MCF 10A (cell line): ENCODE measurements at regions of chr3 and their contacts with region 1.

Region 1: DNA sequence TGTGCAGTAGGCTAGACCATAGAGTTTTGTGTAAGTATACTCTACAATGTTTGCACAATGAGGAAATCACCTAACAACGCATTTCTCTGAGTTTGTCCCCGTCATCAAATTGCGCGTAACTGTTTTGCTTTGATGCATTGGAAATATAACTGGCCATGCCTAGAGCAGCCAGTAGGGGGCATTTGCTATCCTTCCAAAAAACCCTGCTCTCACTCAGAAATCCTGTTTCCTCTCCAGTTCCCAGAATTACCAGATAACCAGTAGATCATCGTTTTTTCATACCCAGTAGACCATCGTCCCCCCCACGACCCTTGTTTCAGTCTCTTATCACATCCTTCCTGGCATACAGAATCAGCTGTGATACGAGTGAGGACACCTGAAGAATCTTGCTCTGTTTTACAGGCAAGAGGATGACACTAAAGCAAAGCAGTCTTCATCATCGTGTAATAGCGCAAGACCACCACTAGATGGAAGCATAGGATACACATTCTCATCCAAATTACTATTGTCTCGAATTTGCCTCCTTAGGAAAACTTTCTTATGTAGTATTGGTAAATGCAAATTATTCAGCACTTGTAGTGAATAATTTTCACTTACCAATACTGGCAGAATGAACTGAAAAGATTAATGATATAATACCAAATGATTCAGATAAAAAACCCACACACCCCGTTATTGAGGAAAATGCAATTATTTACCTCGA is 4.4 kb upstream of the GABRR3 start:
- DNase-seq: peak; percentile 86
- H3K4me3 Mint-ChIP-seq: peak overlapping the region; percentile 59
- H3K27ac Mint-ChIP-seq: no peak overlapping the region
- H3K4me1 Mint-ChIP-seq: no peaks in the 10 kb centered on the region
- H3K27me3 Mint-ChIP-seq: peaks cover 70% of the 10 kb centered on the region
- CTCF ChIP-seq: peak; percentile 79

Region 2: DNA sequence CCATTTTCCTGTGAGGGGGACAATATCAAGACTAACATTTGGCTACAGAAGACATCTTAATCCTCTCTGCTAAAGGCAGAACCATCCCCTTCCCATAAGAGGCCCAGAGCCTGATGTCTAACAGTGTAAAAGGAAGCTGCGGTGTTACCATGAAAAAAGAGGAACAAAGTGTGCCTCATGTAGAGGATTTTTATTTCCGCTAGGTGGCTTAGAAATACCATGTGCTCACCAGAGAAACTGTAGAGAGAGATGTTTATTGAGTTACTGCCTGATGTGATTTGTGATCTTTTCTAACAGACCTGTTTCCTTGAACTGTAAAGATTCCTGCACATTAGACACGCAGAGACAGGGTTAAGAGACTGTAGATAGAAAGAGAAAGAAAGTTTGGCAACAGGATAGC is 149.1 kb after region 1 on chr3:
- CTCF ChIA-PET with region 1: interaction called, 3 read pairs
- POLR2A ChIA-PET with region 1: no interaction called
- intact Hi-C with region 1: loop called (anchors 2 kb)
- DNase-seq: peak; percentile 29
- H3K4me3 Mint-ChIP-seq: no peak overlapping the region
- H3K27ac Mint-ChIP-seq: no peak overlapping the region
- H3K4me1 Mint-ChIP-seq: no peaks in the 10 kb centered on the region
- H3K27me3 Mint-ChIP-seq: no peaks in the 10 kb centered on the region
- CTCF ChIP-seq: peak; percentile 34

Region 3: DNA sequence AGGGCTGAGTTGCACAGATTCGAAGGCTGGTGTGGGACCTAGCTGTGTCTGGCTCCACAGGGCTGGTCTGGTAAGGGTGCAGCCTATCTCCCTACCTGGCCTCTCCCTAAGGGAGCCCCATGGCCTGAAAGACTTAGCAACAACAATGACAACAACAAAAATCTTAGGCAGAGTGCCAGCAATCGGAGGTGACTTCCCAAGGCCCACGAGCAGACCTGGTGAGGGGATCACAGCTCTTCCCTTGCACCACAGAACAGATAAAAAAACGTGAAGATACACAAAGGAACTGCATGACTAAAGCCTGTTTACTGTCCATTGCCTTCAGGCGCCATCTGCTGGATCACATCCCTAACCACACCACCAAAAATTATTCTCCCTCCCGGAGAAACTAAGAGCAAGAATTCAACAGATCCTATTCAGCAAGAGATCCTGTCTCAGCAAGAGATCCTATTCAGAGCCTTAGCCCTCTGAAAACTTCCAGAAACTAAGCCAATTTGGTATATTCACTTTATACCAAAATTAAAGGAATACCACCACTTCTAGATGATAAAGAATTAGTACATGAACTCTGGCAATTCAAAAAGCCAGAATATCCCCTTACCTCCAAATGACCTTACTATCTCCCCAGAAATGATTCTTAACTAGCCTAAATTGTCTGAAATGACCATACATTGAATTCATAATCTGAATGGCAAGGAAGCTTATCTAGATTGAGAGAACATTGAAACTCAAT is 290.1 kb after region 1 on chr3:
- CTCF ChIA-PET with region 1: interaction called, 82 read pairs
- POLR2A ChIA-PET with region 1: no interaction called
- intact Hi-C with region 1: loop called (anchors 1 kb)
- DNase-seq: peak; percentile 69
- H3K4me3 Mint-ChIP-seq: no peak overlapping the region
- H3K27ac Mint-ChIP-seq: no peak overlapping the region
- H3K4me1 Mint-ChIP-seq: no peaks in the 10 kb centered on the region
- H3K27me3 Mint-ChIP-seq: peaks cover 91% of the 10 kb centered on the region
- CTCF ChIP-seq: peak; percentile 75

Region 4: DNA sequence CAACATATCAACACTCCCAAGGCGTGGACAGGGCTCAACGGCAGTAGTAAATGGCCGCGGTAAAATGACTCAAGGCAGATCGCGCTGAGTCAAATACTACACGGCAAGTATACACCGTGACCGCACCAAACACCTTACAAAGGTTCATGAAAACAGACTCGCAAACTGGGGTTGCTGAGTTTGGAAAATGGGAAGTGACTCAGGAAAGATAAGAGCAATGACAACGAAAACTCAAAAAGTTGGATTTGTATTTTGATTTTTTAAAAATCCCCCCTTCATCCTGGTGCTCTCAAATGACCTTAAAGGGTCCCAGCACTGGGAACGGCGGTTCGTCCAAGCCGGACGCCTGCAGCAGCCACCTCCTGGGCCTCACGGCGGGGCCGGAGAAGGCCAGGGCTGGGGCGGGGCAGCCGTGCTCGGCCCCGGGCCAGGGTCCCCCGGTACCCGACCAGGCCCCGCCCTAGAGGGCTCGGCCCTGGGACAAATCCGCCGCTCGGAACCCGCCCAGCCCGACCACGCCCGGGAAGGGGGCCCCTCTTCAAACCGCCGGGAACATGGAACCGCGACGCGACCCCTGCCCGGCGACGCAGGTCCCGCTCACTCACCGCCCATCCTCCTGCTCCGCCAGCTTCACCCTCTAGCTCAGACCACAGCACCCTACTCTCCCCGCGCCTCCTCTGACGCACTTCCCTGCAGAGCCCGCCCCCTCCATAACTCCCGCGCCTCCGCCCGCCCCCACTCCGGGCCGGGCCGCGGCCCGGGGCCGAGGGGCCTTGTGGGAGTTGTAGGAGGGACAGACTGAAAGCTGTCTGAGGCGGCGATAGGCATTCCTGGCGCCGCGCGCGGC is 483.0 kb after region 1 on chr3 and contains the start of gene CLDND1:
- CTCF ChIA-PET with region 1: interaction called, 3 read pairs
- POLR2A ChIA-PET with region 1: interaction called, 5 read pairs
- intact Hi-C with region 1: loop called (anchors 5 kb)
- DNase-seq: peak; percentile 98
- H3K4me3 Mint-ChIP-seq: peak within 1 kb of the TSS; percentile 85
- H3K27ac Mint-ChIP-seq: peak within 1 kb of the TSS; percentile 81
- H3K4me1 Mint-ChIP-seq: peaks cover 27% of the 10 kb centered on the region
- H3K27me3 Mint-ChIP-seq: no peaks in the 10 kb centered on the region
- CTCF ChIP-seq: no peak
- total RNA-seq, gene CLDND1: 128 and 173 TPM in 2 replicates

Region 5: GRCh38 chr3:98573181-98573728 is 533.8 kb after region 1 on chr3:
- CTCF ChIA-PET with region 1: interaction called, 41 read pairs
- POLR2A ChIA-PET with region 1: no interaction called
- intact Hi-C with region 1: loop called (anchors 1 kb)
- DNase-seq: peak; percentile 45
- H3K4me3 Mint-ChIP-seq: no peak overlapping the region
- H3K27ac Mint-ChIP-seq: peak overlapping the region; percentile 40
- H3K4me1 Mint-ChIP-seq: peaks cover 15% of the 10 kb centered on the region
- H3K27me3 Mint-ChIP-seq: no peaks in the 10 kb centered on the region
- CTCF ChIP-seq: peak; percentile 79

Region 6: DNA sequence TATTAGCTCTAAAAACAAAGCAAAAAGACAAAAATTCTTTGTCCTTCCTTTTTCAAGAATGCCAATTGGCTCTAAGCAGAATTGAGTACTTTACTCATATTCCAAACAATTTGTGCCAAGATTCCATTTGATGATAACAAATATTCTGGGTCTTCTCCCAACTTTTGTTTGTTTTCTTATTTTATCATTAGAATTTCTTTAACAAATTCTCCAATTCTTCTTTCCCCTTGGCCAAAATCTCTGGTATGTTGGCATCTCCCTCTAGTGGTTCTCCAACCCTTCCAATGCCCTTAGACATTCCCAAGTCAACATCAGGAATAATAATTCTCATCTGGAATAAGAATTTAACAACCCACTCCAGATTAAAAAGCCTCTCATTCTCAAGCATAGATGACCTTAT is 548.6 kb after region 1 on chr3:
- CTCF ChIA-PET with region 1: interaction called, 16 read pairs
- POLR2A ChIA-PET with region 1: interaction called, 5 read pairs
- intact Hi-C with region 1: loop called (anchors 1 kb)
- DNase-seq: no peak
- H3K4me3 Mint-ChIP-seq: no peak overlapping the region
- H3K27ac Mint-ChIP-seq: no peak overlapping the region
- H3K4me1 Mint-ChIP-seq: peaks cover 33% of the 10 kb centered on the region
- H3K27me3 Mint-ChIP-seq: no peaks in the 10 kb centered on the region
- CTCF ChIP-seq: peak; percentile 30

Region 7: DNA sequence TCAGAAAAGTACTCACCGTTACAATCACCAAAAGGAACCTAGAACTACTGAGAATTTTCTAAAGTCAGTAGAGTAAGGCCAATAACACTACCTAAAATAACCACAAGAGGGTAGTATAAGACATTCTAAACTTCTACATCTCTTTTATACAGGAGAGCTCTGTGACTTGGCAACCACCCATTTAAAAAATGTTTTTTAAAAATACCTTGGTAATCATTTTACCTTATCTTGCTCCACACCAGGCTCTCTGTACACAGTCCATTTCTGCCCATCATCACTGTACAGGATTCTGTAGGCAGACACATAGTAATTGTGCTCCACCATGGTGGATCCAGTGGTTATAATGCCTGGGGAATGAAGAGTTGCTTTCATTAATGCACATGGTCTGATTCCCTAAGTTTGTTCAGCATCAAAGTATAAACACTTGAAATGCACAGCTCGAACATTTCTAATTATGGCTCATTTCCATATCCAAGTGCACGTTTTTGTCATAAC is 778.1 kb after region 1 on chr3:
- CTCF ChIA-PET with region 1: interaction called, 7 read pairs
- POLR2A ChIA-PET with region 1: interaction called, 3 read pairs
- intact Hi-C with region 1: loop called (anchors 10 kb)
- DNase-seq: peak; percentile 50
- H3K4me3 Mint-ChIP-seq: no peak overlapping the region
- H3K27ac Mint-ChIP-seq: peak overlapping the region; percentile 27
- H3K4me1 Mint-ChIP-seq: peaks cover 13% of the 10 kb centered on the region
- H3K27me3 Mint-ChIP-seq: no peaks in the 10 kb centered on the region
- CTCF ChIP-seq: peak; percentile 53